BJ (cell line): ENCODE measurements at regions of chrX and their contacts with region 1.

Region 1: DNA sequence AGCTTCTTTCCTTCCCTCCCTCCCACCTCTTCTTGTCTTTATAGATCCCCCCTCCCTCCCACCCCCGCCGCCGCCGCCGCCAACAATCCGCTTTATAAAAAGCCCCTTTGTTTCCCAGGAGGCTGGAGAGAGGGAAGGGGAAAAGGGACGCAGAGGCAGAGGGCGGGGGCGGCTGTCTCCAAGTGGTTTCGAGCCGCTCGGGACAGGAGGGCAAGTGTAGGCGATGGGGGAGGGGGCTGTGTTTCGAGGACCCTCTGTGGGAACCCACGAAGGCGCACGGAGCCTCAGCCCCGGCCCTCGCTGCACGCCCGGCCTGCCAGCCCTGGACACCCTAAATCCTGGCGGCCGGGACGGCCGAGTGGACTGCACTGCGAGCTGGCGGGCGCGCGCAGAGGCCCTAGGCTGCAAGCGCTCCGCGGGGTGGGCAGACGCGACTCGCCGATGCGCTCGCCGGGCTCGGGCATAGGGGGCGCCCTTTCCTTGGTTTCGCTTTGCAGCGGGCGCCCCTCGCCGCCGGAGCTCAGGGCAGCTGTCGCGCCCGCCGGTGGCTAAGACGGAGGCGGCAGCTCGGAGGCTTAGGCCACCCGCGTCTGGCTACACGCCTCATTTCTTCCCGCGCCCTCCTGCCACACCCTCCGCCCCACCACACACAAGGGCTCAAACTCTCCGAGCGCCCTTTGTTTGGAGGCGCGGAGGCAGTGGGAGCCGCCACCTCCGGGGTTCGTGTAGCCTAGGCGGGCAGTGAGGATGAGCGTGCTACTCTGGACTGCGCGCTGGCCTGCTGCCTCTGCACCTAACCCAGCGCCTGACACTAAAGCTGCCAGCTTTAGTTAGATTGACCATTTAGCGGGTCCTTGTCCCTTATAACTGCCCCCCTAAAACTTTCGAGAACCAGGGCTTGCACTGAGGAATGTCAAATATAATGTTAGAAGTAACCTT is 2.2 kb downstream of the MAMLD1 start:
- DNase-seq: no peak
- H3K4me3 ChIP-seq: peak overlapping the region; percentile 69
- H3K27me3 ChIP-seq: no peaks in the 10 kb centered on the region
- CTCF ChIP-seq: peak; percentile 46

Region 2: GRCh38 chrX:150486011-150486410 is 120.7 kb after region 1 on chrX:
- CTCF ChIA-PET with region 1: interaction called, 21 read pairs
- POLR2A ChIA-PET with region 1: no interaction called
- DNase-seq: no peak
- H3K4me3 ChIP-seq: no peak overlapping the region
- H3K27me3 ChIP-seq: no peaks in the 10 kb centered on the region
- CTCF ChIP-seq: peak; percentile 62